Left cardiac atrium (tissue), 4 donors: ENCODE measurements at regions of chr12 and their contacts with region 1.

Region 1: GRCh38 chr12:68364893-68365725 is 32.9 kb upstream of the MDM1 start:
- DNase-seq: peak; percentile 95
- ATAC-seq: peak; percentile 98 to 99

Region 2: DNA sequence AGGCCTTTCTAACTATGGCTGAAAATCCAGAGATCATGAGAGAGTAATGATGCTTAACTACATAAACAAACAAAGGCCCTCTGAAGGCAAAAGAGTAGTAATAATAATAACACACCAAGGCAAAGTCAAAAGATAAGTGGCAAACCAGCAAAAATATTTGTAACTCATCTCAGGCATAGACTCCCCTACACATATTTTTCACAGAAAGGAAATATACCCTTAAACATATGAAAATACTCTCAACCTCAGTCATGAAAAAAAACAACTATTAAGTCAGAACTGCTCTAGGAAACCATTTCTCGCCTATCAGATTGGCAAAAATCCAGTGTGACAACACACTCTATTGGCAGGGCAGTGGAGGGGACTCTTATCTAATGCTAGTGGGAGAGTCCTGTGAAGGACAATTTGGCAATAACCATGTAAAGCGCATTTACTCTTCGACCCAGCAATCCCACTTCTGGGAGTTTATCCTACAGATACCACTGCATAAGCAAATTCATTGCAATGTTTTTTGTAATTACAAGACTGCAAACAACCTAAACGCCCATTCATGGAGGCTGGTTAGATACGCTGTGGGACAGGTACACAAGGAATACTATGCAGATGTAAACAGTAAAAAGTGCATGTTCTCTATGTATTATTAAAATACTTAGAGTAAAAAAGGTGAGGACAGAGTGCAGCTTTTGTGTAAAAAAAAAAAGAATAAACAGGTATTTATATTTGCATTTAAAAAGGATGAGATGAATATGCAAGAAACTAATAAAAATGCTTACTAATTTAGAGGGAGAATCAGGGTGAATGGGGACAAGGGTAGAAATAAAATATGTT is 85.7 kb before region 1 on chr12:
- intact Hi-C with region 1: no loop called
- DNase-seq: no peak
- ATAC-seq: no peak

Region 3: GRCh38 chr12:68406134-68406594 is 41.1 kb after region 1 on chr12:
- intact Hi-C with region 1: loop called in 1 of 2 experiments (anchors 5 kb)
- DNase-seq: peak; percentile 95
- ATAC-seq: peak; percentile 95 to 99

Region 4: DNA sequence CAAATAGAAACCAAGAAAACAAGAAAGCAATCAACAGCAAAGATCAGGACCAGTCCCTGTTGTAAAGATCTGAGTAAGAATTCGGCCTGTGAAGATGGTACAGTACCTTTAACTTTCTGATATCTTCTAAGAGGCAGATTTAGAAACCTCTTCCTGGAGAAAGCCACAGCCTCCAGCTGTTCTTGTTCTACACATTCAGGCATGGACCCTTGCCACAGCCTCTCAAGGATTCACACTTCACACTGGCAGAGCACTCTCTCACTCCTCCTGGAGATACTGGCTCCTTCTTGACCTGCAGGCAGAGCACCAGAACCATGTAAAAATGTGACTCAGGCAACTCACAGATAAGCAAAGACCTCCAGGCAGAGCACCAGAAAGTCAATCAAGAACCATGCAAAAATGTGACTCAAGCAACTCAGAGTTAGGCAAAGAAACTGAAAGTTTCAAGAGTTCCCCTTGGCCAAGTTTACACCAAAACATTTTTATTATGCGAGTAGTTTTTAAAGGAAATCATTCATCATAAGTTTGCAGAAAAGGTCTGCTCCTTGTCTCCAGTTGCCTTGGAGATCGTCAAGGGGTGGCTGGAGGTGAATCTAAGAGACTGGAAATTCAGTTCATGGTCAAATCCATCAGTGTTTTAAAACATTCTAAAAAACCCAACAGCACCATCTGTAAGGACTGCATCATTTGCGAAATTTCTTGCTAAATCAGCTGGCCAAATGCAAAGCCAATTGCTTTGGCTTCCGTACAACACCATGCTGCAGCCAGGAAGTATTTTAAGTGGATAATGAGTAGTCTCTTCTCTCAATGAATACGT is 86.4 kb after region 1 on chr12:
- intact Hi-C with region 1: loop called in 1 of 2 experiments (anchors 5 kb)
- DNase-seq: peak; percentile 39
- ATAC-seq: peak; percentile 70 to 94

Region 5: DNA sequence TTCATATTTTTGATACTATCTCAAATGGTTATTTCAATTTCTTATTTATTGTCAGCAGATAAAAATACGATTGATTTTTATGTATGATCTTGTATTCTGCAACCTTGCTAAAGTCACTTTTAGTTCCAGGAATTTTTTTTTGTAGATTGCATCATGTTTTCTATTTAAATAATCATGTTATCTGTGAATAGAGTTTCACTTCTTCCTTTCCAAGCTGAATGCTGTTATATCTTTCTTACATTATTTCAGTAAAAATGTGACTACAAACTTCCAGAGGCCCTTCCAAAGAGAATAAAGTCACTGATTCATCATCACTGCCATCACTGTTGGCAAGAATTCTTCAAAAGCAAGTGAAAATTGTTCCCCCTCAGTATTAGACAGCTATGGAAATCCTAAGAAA is 140.9 kb after region 1 on chr12:
- intact Hi-C with region 1: no loop called
- DNase-seq: no peak
- ATAC-seq: no peak

Region 6: GRCh38 chr12:68610370-68611093 is 245.4 kb after region 1 on chr12 and contains the start of gene RAP1B:
- intact Hi-C with region 1: loop called in 1 of 2 experiments (anchors 10 kb)
- DNase-seq: peak; percentile 92
- ATAC-seq: peak; percentile 96 to 97
- total RNA-seq, gene RAP1B: 82.2 to 91.3 TPM

Region 7: DNA sequence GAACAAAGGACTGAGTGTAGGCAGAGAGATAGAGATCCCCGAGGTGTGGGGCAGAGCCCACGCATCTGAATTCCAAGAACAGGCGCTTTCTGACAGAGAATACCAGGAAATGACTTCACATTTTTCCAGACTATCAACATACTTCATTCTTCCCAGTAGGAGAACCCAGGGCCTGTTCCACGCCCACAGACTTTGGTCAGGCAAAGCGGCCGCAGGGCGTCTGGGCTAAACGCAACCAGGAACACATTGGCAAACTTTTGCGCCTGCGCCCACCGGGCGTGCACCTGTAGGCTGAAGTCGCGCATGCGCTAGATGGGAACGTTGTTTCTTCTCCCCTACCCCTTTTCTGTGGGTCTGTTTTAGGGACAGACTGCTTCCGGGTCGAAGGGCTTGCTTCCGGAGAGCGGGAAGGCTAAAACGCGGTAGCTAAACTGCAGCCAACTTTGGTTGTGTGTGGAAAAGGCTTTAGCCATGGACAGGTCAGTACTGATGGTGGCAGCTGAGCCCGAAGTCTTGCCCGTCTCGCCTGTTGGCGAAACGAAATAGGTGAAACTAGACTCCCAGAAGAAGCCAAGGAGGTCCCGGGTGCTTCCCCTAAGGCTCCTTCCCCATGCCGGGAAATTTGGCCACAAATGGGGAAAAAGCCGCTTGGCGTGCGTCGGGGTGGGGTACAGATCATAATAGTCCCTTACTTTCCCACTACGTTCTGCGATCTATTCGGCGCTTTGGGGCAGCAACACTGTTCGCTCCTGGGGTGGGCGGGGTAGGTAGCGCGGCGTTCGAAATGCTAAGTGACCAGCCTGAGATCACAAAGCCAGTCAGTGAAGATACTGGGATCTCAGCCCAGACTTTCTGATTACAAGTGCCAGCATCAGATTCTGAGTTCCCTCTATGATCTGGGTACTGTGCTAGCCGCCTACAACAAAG is 321.7 kb after region 1 on chr12 and contains the start of gene NUP107:
- intact Hi-C with region 1: loop called in 1 of 2 experiments (anchors 5 kb)
- DNase-seq: peak; percentile 100
- ATAC-seq: peak; percentile 98 to 99
- total RNA-seq, gene NUP107: 23.5 to 31.6 TPM